Posterior cingulate gyrus (tissue), 11 donors: ENCODE measurements at regions of chr3 and their contacts with region 1.

Region 1: GRCh38 chr3:42012935-42013690 is 51.2 kb upstream of the ULK4 start:
- DNase-seq: peak; percentile 41 to 95 (median 64)

Region 2: GRCh38 chr3:41961750-41962679 is 51.1 kb before region 1 on chr3 and contains the start of gene ULK4:
- intact Hi-C with region 1: loop called (anchors 5 kb)
- DNase-seq: peak; percentile 95 to 100 (median 98)

Region 3: GRCh38 chr3:42101048-42101447 is 87.9 kb after region 1 on chr3:
- intact Hi-C with region 1: no loop called
- DNase-seq: no peak